ENCODE measurements at regions of chr2 and their contacts with region 1.

Region 1: DNA sequence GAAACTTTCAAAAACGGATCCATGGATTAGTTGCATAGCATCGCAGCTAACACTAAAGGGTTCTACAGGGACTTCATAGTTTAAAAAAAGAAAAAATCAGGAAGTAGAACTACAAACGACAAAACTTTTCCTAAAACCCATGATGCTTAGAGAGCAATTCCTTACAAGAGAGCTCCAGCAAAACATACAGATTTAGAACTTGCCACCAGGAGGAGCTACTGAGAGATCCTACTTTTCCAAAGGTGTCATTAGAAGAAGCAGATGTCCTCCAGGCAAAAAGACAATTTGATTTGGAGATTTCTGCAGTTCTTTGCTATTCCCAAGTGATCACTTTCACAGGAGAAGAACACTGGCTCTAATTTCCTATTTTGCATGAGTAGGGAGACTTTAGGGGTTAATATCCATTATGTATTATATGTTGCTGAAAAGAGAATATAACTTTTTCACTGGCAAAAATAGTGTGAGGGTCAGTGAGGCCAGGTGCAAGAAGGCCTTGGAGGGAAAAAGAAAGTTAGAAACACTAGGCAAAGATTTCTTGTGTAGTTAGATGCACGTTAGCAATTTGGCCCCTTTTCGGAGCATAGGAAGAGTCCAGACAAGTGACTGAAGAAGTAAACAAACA is 436.2 kb downstream of the SUCLG1 start:
- DNase-seq: peak; percentile 25
- ATAC-seq: no peak
- H3K4me3 Mint-ChIP-seq: no peak overlapping the region
- H3K27ac Mint-ChIP-seq: no peak overlapping the region
- H3K4me1 Mint-ChIP-seq: no peaks in the 10 kb centered on the region
- H3K27me3 Mint-ChIP-seq: peaks cover 6% of the 10 kb centered on the region
- CTCF ChIP-seq: peak; percentile 71

Region 2: DNA sequence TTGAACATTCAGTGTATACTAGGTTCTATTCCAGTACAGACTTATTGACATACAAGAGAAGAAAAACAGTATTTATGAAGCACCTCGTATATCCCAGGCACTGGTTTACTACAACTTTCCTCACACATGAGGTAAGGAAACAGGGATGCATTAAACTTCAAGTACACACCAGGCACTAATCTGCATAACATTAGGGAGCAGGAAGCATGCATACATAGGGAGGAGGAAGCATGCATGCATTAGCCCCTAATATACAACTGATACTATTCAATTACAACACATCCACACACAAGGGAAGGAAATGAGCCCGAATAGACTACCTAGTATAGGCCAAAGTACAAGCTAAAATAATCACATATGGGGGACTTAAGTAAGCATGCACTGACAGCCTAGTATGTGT is 89.2 kb before region 1 on chr2:
- CTCF ChIA-PET with region 1: no interaction called
- POLR2A ChIA-PET with region 1: no interaction called
- intact Hi-C with region 1: no loop called
- DNase-seq: no peak
- ATAC-seq: no peak
- H3K4me3 Mint-ChIP-seq: no peak overlapping the region
- H3K27ac Mint-ChIP-seq: no peak overlapping the region
- H3K4me1 Mint-ChIP-seq: no peaks in the 10 kb centered on the region
- H3K27me3 Mint-ChIP-seq: no peaks in the 10 kb centered on the region
- CTCF ChIP-seq: no peak

Region 3: DNA sequence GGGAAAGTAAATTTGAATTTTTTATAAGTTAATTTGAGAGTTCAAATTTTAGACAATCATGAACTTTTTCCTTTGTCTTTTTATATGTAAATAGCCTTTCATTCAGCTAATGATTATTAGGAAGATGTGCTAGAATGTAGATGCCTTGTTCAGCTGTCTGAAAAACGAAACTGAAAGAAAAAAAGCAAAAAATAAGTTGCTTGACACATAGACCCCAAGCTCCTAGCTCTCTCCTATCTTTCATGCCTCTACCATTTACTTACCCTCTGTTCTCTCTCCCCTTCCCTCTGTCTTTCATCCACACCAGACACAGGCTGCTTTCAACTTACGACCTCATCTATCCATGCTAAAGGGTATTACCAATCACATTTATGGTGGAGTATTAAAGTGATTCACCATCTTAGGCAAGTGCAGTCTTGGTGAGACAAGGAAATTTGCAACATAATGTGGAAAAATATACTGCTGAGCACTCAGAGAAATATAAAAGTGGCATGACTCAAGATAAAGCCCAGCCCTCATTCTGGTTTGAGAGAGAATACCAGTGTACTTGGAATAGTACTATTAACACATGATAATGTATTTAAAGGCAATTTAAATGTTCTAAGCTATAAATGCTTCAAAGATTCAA is 10.5 kb after region 1 on chr2:
- CTCF ChIA-PET with region 1: interaction called, 11 read pairs
- POLR2A ChIA-PET with region 1: no interaction called
- intact Hi-C with region 1: no loop called
- DNase-seq: no peak
- ATAC-seq: no peak
- H3K4me3 Mint-ChIP-seq: no peak overlapping the region
- H3K27ac Mint-ChIP-seq: no peak overlapping the region
- H3K4me1 Mint-ChIP-seq: peaks cover 3% of the 10 kb centered on the region
- H3K27me3 Mint-ChIP-seq: no peaks in the 10 kb centered on the region
- CTCF ChIP-seq: no peak

Region 4: DNA sequence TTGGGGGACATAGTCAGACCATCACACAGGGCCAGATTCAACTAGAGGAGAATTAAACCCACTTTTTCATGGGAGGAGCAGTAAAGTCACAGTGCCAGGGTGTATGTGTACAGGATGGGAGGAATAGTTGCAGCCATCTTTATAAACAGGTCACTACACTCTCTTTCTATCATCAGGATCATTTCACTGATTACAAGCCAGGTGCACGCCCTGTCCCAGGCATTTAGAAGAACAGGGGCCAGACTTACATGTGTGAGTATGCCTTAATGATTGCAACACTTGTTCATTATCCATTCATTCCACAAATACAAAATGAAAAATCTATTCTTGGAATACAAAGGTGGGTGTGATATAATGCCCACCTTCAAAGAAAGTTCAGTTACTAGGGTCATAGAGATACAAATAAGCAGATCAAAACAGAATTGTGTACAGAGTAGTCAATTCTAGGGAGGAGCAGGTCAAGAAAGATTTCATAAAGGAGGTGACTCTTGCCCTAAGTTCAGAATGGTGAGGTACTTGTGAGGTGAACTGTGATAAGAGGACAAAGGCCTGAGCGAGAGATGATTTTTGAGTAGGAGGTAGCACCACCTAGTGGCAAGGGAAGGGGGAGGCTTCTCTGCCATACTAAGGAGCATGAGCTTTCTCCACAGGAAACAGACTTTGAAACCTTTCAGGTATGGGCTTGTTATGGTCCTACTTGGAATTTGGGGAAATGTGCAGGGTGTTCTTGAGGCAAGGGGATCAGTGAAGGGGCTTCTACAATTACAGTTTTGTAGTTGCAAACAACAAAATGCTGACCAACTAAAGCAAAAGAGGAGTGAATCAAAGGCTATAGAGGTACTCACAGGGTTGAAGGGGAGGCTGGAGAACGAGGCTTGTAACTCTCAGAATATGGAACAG is 279.8 kb after region 1 on chr2:
- CTCF ChIA-PET with region 1: interaction called, 17 read pairs
- POLR2A ChIA-PET with region 1: no interaction called
- intact Hi-C with region 1: loop called (anchors 5 kb)
- DNase-seq: peak; percentile 54
- ATAC-seq: peak; percentile 64
- H3K4me3 Mint-ChIP-seq: no peak overlapping the region
- H3K27ac Mint-ChIP-seq: no peak overlapping the region
- H3K4me1 Mint-ChIP-seq: no peaks in the 10 kb centered on the region
- H3K27me3 Mint-ChIP-seq: peaks cover 8% of the 10 kb centered on the region
- CTCF ChIP-seq: peak; percentile 67

Measured in activated CD8-positive, alpha-beta T cell treated with anti-CD3 and anti-CD28 coated beads for 36 hours (primary cell).